WTC11 (cell line): ENCODE measurements at regions of chr11 and their contacts with region 1.

Region 1: DNA sequence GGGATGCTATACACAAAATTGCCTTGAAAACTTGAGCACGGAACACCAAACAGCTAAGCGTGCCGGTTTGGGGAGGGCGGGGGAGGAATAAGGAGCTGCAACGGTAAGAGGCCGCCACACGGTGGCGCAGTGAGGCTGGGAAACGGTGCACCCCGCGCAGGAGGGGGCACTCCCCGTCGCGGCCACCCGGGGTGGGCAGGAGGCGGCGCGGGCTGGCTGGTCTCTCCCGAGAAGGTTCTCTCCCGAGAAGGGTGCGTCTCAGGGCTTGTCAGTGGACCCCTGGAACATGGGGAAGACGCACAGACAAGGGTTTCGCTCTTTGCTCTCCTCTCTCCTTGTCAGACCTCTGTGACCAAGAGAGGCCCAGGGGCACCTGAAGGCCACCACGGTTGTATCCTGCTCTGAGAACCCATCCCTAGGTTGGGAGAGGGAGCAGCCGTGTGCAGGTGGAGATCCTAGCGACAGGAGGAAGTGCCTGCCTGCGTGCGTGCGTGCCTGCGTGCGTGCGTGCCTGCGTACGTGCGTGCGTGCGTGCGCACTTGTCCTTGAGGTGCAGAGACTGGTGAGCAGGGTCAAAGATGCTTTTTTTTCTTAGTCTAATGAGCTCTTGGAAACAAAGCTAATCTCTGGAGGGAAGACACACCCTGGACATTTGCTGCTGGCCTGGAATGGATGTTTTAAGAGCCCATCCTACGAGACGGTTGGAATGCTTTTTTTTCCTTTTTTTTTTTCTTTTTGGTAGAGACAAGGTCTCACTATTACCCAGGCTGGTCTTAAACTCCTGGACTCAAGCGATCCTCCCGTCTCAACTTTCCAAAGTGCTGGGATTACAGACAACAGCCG is 18.1 kb upstream of the JAM3 start:
- DNase-seq: peak; percentile 69
- ATAC-seq: peak; percentile 35
- H3K4me3 Mint-ChIP-seq: peak overlapping the region; percentile 24
- H3K27ac Mint-ChIP-seq: no peak overlapping the region
- H3K4me1 Mint-ChIP-seq: peaks cover 58% of the 10 kb centered on the region
- H3K27me3 Mint-ChIP-seq: peaks cover 7% of the 10 kb centered on the region
- CTCF ChIP-seq: peak; percentile 87

Region 2: GRCh38 chr11:133947321-133947756 is 103.4 kb before region 1 on chr11:
- CTCF ChIA-PET with region 1: interaction called, 16 read pairs
- POLR2A ChIA-PET with region 1: no interaction called
- DNase-seq: peak; percentile 76
- ATAC-seq: peak; percentile 65
- H3K4me3 Mint-ChIP-seq: no peak overlapping the region
- H3K27ac Mint-ChIP-seq: no peak overlapping the region
- H3K4me1 Mint-ChIP-seq: peaks cover 59% of the 10 kb centered on the region
- H3K27me3 Mint-ChIP-seq: no peaks in the 10 kb centered on the region
- CTCF ChIP-seq: no peak

Region 3: GRCh38 chr11:134033696-134034491 is 16.9 kb before region 1 on chr11:
- CTCF ChIA-PET with region 1: interaction called, 125 read pairs
- POLR2A ChIA-PET with region 1: interaction called, 3 read pairs
- DNase-seq: peak; percentile 83
- ATAC-seq: peak; percentile 87
- H3K4me3 Mint-ChIP-seq: peak overlapping the region; percentile 50
- H3K27ac Mint-ChIP-seq: peak overlapping the region; percentile 88
- H3K4me1 Mint-ChIP-seq: peaks cover 57% of the 10 kb centered on the region
- H3K27me3 Mint-ChIP-seq: peaks cover 23% of the 10 kb centered on the region
- CTCF ChIP-seq: no peak

Region 4: DNA sequence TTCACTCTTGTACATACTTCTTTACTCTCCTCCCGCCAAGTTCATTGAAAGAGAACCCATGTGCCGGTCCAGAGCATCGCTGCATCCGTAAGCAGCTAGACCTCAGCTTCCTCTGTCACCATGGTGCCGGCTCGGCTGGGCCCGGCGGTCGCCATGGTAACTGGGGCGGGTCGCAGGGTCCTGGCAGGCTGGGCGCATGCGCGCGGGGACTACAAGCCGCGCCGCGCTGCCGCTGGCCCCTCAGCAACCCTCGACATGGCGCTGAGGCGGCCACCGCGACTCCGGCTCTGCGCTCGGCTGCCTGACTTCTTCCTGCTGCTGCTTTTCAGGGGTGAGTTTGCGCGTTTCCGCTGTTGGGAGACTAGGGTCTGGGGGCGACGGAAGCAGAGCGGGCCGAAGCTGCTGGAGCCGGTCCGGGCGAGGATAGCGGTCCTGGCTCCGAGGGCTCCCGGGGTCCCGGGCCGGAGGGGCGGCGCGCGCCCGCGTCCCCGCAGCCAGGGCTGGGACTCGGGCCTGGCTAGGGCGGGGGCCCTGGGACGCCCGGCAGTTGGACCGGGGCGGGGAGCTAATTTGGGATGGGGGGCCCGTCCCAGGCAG is 18.2 kb after region 1 on chr11 and contains the start of gene JAM3:
- CTCF ChIA-PET with region 1: interaction called, 16 read pairs
- POLR2A ChIA-PET with region 1: interaction called, 3 read pairs
- DNase-seq: peak; percentile 99
- ATAC-seq: peak; percentile 87
- H3K4me3 Mint-ChIP-seq: peak within 1 kb of the TSS; percentile 97
- H3K27ac Mint-ChIP-seq: peak within 1 kb of the TSS; percentile 85; the same call in 1 of the 2 replicates
- H3K4me1 Mint-ChIP-seq: peaks cover 52% of the 10 kb centered on the region
- H3K27me3 Mint-ChIP-seq: peaks cover 30% of the 10 kb centered on the region
- CTCF ChIP-seq: no peak
- total RNA-seq, gene JAM3: 32.7 to 34.1 TPM (median 32.9 TPM) in 3 replicates

Region 5: GRCh38 chr11:134124660-134125451 is 74.1 kb after region 1 on chr11:
- CTCF ChIA-PET with region 1: interaction called, 13 read pairs
- POLR2A ChIA-PET with region 1: interaction called, 4 read pairs
- DNase-seq: peak; percentile 77
- ATAC-seq: peak; percentile 87
- H3K4me3 Mint-ChIP-seq: peak overlapping the region; percentile 61
- H3K27ac Mint-ChIP-seq: no peak overlapping the region
- H3K4me1 Mint-ChIP-seq: peaks cover 42% of the 10 kb centered on the region
- H3K27me3 Mint-ChIP-seq: peaks cover 20% of the 10 kb centered on the region
- CTCF ChIP-seq: no peak